HepG2 (cell line): ENCODE measurements at regions of chr7 and their contacts with region 1.

Region 1: DNA sequence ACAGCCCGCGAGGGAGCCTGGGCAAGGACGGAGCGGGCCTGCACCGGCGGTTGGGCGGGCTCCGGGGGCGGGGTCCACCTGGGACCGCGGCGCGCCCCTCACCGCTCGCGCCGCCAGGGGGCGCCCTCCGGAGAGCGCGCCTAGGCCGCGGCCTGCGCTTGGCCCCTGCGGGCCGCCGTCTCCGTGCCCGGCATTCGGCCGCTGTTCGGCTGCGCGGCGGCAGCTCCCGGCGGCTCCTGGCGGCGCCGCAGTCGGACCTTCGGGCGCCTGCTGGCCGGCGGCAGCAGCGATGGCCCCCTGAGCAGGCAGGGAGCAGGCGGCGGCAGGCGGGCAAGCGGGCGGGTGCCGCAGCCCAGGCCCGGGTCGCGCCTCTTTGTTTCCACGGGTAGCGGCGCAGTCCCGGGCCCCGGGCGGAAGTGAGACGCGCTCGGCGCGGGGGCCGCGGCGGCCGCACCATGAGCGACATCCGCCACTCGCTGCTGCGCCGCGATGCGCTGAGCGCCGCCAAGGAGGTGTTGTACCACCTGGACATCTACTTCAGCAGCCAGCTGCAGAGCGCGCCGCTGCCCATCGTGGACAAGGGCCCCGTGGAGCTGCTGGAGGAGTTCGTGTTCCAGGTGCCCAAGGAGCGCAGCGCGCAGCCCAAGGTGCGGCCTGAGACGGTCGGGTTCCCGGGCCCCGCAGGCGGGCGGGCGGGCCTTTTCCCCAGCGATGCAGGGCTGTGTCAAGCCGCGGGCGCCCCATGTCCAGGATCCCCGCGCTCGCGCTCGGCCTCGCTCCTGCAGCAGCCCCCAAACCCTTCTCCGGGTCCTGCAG is at the start of gene INTS15:
- DNase-seq: peak; percentile 51
- ATAC-seq: peak; percentile 85
- H3K4me3 ChIP-seq: peak within 1 kb of the TSS; percentile 88 to 97 (median 96)
- H3K27ac ChIP-seq: peak within 1 kb of the TSS; percentile 75
- H3K4me1 ChIP-seq: peaks cover 33% of the 10 kb centered on the region
- H3K27me3 ChIP-seq: no peaks in the 10 kb centered on the region
- CTCF ChIP-seq: peak; percentile 66
- EP300 ChIP-seq: peak in 1 of 2 experiments; percentile 21; a peak in 1 of 4 replicates
- POLR2A ChIP-seq: peak; percentile 69 to 72; a peak in 3 of 4 replicates
- RAD21 ChIP-seq: peak; percentile 92
- total RNA-seq, gene INTS15: 8.7 and 16.3 TPM in 2 replicates

Region 2: DNA sequence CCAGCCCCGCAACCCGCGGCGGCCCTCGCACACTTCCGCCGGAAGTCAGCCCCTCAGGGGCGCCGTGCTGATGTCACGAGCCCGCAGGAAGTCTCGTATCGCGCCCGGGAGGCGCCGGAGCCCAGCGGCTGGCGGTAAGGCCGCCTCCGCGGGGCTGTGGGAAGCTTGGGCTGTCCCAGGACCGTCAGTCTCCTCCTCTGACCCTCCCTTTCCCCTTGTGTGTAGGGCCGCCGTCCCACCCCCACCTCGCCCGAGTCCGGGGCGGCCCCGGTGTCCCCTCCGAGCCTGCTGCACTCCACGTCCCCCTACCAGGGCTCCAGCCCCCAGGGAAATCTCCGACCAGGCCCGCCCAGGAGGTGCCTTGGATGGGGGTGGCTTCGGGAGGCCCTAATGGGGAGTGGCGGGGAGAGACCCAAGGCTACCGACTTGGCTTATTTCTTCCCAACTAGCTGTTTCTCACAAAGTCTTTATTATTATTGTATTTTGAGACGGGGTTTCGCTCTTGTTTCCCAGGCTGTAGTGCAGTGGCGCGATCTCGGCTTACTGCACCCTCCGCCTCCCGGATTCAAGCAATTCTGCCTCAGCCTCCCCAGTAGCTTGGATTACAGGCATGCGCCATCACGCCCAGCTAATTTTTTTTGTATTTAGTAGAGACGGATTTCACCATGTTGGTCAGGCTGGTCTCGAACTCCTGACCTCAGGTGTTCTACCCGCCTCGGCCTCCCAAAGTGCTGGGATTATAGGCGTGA is 12.5 kb before region 1 on chr7 and contains the start of gene ZDHHC4:
- CTCF ChIA-PET with region 1: interaction called, 4 read pairs
- POLR2A ChIA-PET with region 1: interaction called, 105 read pairs
- in situ Hi-C with region 1: no loop called
- intact Hi-C with region 1: loop called (anchors 2 kb)
- DNase-seq: peak; percentile 87
- ATAC-seq: peak; percentile 84
- H3K4me3 ChIP-seq: peak within 1 kb of the TSS; percentile 86 to 90 (median 87)
- H3K27ac ChIP-seq: peak within 1 kb of the TSS; percentile 98
- H3K4me1 ChIP-seq: peaks cover 76% of the 10 kb centered on the region
- H3K27me3 ChIP-seq: no peaks in the 10 kb centered on the region
- CTCF ChIP-seq: 0 out of 2 replicates have a peak, but pooled peaks have one; percentile 17
- EP300 ChIP-seq: peak in 1 of 2 experiments; percentile 35; a peak in 1 of 4 replicates
- POLR2A ChIP-seq: peak; percentile 92 to 95
- RAD21 ChIP-seq: peak; percentile 59
- total RNA-seq, gene ZDHHC4: 65.4 and 83.2 TPM in 2 replicates

Region 3: GRCh38 chr7:6706677-6707544 is 116.9 kb after region 1 on chr7 and contains the start of gene ZNF12:
- CTCF ChIA-PET with region 1: no interaction called
- POLR2A ChIA-PET with region 1: interaction called, 3 read pairs
- in situ Hi-C with region 1: no loop called
- intact Hi-C with region 1: loop called (anchors 10 kb)
- DNase-seq: peak; percentile 90
- ATAC-seq: peak; percentile 94
- H3K4me3 ChIP-seq: peak within 1 kb of the TSS; percentile 82 to 97 (median 87)
- H3K27ac ChIP-seq: peak within 1 kb of the TSS; percentile 74
- H3K4me1 ChIP-seq: peaks cover 70% of the 10 kb centered on the region
- H3K27me3 ChIP-seq: no peaks in the 10 kb centered on the region; a peak in 1 of 5 replicates
- CTCF ChIP-seq: no peak
- EP300 ChIP-seq: no peak
- POLR2A ChIP-seq: peak; percentile 55 to 82
- RAD21 ChIP-seq: peak; percentile 49
- total RNA-seq, gene ZNF12: 22.8 and 28.1 TPM in 2 replicates

Region 4: DNA sequence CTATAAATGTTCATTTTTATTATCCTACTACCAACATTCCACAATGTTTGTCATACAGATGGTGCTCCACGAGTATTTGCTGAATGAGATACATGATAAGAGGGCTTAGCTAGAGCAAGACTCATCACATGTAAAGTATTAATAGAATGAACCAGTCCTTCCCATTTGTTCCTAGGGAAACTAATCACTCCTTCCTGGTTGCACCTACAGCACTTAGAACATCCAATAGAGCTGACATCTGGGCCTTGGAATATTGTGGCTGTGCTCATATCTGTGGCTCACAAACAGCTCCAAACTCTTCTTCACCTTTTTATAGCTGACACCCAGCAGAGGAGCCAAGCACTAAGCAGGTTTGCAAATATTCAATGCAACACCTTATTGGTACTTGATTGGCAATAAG is 500.4 kb after region 1 on chr7:
- CTCF ChIA-PET with region 1: no interaction called
- POLR2A ChIA-PET with region 1: no interaction called
- in situ Hi-C with region 1: no loop called
- intact Hi-C with region 1: no loop called
- DNase-seq: no peak
- ATAC-seq: no peak
- H3K4me3 ChIP-seq: no peak overlapping the region
- H3K27ac ChIP-seq: no peak overlapping the region
- H3K4me1 ChIP-seq: no peaks in the 10 kb centered on the region
- H3K27me3 ChIP-seq: no peaks in the 10 kb centered on the region
- CTCF ChIP-seq: no peak
- EP300 ChIP-seq: no peak
- POLR2A ChIP-seq: no peak
- RAD21 ChIP-seq: no peak